ENCODE measurements at regions of chr12 and their contacts with region 1.

Region 1: DNA sequence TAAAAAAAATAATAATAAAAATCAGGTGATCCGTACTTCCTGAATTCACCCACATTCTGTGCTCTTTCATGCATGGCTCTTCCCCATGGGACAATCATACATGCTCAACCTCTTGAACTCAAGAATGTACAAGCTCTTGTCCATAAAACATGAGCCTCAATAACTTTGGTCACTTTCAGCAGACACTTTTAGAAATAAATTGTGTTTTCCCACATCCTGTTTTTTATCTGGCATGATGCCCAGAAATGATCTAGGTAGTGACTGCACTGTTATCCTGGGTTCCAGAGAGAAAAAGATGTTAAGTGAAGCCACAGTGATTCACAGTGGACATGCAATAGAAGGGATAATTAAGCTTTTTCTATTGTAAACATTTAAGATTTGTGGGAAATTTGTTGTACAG is 537.6 kb upstream of the TMEM132C start:
- DNase-seq: no peak
- H3K4me3 ChIP-seq: no peak overlapping the region
- H3K27ac ChIP-seq: no peak overlapping the region
- H3K4me1 ChIP-seq: no peaks in the 10 kb centered on the region
- H3K27me3 ChIP-seq: no peaks in the 10 kb centered on the region
- CTCF ChIP-seq: no peak

Region 2: GRCh38 chr12:127640181-127640886 is 89.0 kb before region 1 on chr12:
- CTCF ChIA-PET with region 1: no interaction called
- dilution Hi-C with region 1: no loop called
- in situ Hi-C with region 1: no loop called
- intact Hi-C with region 1: no loop called
- DNase-seq: no peak
- H3K4me3 ChIP-seq: no peak overlapping the region
- H3K27ac ChIP-seq: no peak overlapping the region
- H3K4me1 ChIP-seq: no peaks in the 10 kb centered on the region
- H3K27me3 ChIP-seq: no peaks in the 10 kb centered on the region
- CTCF ChIP-seq: no peak

Region 3: DNA sequence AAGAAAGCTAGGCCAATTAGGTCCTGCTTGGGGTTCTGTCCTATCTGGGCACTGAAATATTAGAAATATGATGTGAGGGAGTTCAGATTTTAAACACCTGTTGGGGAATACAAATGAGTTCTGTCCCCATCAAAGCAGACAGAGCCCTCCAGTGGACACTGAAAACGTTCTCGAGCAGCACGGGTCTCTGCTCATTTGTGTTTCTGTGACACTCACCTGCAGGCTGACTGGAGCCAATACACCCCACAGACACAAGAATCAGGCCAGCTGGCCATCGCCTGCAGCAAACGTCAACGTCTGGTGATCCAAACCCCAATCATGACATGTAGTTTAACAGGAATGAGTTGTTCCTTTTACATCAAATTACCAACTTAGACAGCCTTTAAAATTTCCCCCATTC is 44.1 kb after region 1 on chr12:
- CTCF ChIA-PET with region 1: no interaction called
- dilution Hi-C with region 1: loop called (anchors 10 kb)
- in situ Hi-C with region 1: no loop called
- intact Hi-C with region 1: no loop called
- DNase-seq: no peak
- H3K4me3 ChIP-seq: no peak overlapping the region
- H3K27ac ChIP-seq: no peak overlapping the region
- H3K4me1 ChIP-seq: no peaks in the 10 kb centered on the region
- H3K27me3 ChIP-seq: no peaks in the 10 kb centered on the region
- CTCF ChIP-seq: no peak

Measured in mammary epithelial cell (primary cell).